Endothelial cell of umbilical vein (primary cell): ENCODE measurements at regions of chr19 and their contacts with region 1.

Region 1: GRCh38 chr19:49148784-49149651 is 6.2 kb downstream of the HRC start:
- DNase-seq: peak; percentile 91
- H3K4me3 ChIP-seq: peak overlapping the region; percentile 31 to 73 (median 61)
- H3K27ac ChIP-seq: no peak overlapping the region
- H3K4me1 ChIP-seq: peaks cover 28% of the 10 kb centered on the region
- H3K27me3 ChIP-seq: peaks cover 2 to 5% of the 10 kb centered on the region in 2 experiments
- CTCF ChIP-seq: no peak
- POLR2A ChIP-seq: no peak

Region 2: DNA sequence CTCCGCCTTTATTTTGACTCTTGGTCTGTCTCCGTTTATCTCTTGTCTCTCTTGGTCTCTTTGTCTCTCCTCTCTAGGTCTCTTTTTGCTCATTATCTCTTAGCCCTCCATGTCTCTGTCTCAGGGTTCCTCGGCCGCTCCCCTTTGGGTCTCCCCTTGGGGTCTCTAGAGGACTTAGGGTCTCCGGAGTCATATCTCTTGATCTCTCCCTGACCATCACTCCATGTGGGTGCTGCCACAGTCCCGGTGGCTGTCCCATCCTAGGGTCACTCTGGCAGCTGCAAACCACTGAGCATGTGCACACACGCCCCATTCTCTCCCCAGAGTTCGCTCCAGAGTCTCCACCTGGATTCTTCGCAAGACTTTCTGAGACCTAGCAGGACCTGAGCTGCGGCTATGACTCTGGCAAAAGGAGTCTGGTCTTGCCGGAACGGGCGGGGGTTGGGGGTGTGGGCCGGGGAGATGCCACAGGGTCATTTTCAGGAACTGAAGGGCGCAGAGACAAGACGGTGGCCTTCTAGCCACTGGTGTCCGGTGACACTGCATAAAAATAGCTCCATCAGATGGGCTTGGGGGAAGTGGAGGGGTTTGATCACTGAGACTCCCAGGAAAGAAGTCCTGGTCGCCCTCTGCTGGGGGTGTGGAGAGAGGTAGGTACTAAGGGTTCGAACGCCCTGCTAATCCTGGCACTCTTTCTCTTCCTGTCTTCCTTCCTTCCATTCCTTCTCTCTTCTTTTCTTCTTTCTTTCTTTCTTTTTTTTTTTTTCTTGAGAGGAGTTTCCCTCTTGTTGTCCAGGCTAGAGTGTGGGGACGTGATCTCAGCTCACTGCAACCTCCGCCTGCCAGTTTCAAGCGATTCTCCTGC is 75.3 kb before region 1 on chr19:
- CTCF ChIA-PET with region 1: interaction called, 8 read pairs
- POLR2A ChIA-PET with region 1: no interaction called
- dilution Hi-C with region 1: no loop called
- intact Hi-C with region 1: loop called (anchors 1 kb)
- DNase-seq: no peak
- H3K4me3 ChIP-seq: no peak overlapping the region
- H3K27ac ChIP-seq: no peak overlapping the region
- H3K4me1 ChIP-seq: no peaks in the 10 kb centered on the region
- H3K27me3 ChIP-seq: peaks cover 22 to 24% of the 10 kb centered on the region in 2 experiments
- CTCF ChIP-seq: peak in 1 of 2 donors; percentile 8
- POLR2A ChIP-seq: no peak

Region 3: GRCh38 chr19:49118565-49119410 is 30.2 kb before region 1 on chr19 and contains the start of gene C19orf73:
- CTCF ChIA-PET with region 1: interaction called, 18 read pairs
- POLR2A ChIA-PET with region 1: interaction called, 4 read pairs
- dilution Hi-C with region 1: no loop called
- intact Hi-C with region 1: loop called (anchors 1 kb)
- DNase-seq: peak; percentile 94
- H3K4me3 ChIP-seq: peak within 1 kb of the TSS; percentile 16 to 65 (median 57)
- H3K27ac ChIP-seq: peak within 1 kb of the TSS; percentile 63
- H3K4me1 ChIP-seq: peaks cover 14% of the 10 kb centered on the region
- H3K27me3 ChIP-seq: peaks cover 4 to 8% of the 10 kb centered on the region in 2 experiments
- CTCF ChIP-seq: peak in 1 of 2 donors; percentile 7
- POLR2A ChIP-seq: peak; percentile 53
- total RNA-seq, gene C19orf73: 1.5 TPM in 1 of 2 replicates, not detected in the other

Region 4: DNA sequence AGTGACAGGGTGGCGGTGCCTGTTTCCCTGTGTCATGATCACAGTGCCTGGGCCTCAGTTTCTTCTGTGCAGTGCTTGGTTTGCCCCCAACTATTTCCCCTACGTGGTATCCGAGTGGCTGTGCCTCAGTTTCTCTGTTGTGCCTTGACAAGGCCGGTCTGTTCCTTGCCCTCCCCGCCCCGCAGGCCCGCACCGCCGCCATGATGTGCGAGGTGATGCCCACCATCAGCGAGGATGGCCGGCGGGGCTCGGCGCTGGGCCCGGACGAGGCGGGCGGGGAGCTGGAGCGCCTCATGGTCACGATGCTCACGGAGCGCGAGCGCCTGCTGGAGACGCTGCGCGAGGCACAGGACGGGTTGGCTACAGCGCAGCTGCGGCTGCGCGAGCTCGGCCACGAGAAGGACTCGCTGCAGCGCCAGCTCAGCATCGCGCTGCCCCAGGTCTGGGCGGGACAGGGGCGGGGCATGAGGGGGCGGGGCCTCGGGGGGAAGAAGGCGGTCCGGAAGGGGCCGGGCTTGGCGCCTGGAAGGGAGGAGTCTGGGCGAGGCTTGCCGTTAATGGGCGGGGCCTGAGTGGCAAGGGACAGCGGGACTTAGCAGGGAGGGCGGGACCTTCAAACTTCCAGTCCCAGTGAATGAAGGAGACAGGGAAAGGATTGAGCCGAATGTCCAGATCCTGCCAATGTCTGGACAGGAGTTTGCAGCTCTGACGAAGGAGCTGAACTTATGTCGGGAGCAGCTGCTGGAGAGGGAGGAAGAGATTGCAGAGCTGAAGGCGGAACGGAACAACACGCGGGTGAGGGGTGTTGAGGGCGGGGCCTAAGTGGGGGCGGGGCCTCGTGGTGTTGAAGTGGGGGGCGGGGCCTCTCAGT is 21.1 kb before region 1 on chr19:
- CTCF ChIA-PET with region 1: interaction called, 15 read pairs
- POLR2A ChIA-PET with region 1: no interaction called
- dilution Hi-C with region 1: no loop called
- intact Hi-C with region 1: no loop called
- DNase-seq: peak; percentile 98
- H3K4me3 ChIP-seq: no peak overlapping the region
- H3K27ac ChIP-seq: no peak overlapping the region
- H3K4me1 ChIP-seq: no peaks in the 10 kb centered on the region
- H3K27me3 ChIP-seq: peaks cover 0 to 4% of the 10 kb centered on the region in 2 experiments
- CTCF ChIP-seq: peak in 1 of 2 donors; percentile 38
- POLR2A ChIP-seq: no peak

Region 5: DNA sequence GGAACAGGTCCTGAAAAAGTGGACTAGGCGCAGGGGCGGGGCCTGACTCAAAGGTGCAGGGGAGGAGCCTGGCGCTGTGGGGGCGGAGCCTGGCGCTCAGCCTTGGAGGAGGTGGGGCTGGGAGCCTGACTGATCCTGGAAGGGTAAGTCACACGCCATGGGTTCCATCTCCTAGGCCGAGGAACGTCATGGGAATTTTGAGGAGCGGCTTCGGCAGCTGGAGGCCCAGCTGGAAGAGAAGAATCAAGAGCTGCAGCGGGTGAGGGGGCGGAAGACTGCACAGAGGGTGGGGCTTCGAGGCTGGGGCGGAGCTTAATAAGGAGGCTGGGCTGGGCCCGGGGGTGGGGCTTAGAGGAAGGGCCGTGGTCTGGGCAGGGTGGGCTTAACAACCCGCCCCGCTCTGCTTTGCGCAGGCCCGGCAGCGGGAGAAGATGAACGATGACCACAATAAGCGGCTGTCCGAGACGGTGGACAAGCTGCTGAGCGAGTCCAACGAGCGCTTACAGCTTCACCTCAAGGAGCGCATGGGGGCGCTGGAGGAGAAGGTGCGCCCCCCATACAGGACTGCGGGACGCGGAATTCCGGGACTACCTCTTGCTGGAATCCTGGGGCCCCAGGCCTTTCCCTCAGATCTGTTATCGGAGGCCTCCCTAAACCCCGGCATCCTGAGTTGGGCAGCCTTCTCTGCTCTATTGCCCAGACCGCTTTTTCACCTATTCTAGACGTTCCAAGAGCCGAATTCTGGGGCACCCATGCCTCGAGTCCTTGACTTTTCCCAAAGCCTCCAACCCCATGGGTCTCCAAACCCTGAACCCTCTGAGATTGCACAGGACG is 15.2 kb before region 1 on chr19:
- CTCF ChIA-PET with region 1: interaction called, 10 read pairs
- POLR2A ChIA-PET with region 1: no interaction called
- dilution Hi-C with region 1: no loop called
- intact Hi-C with region 1: no loop called
- DNase-seq: peak; percentile 54
- H3K4me3 ChIP-seq: peak overlapping the region in 1 of 3 experiments; percentile 30
- H3K27ac ChIP-seq: no peak overlapping the region
- H3K4me1 ChIP-seq: no peaks in the 10 kb centered on the region
- H3K27me3 ChIP-seq: peaks cover 0 to 7% of the 10 kb centered on the region in 2 experiments
- CTCF ChIP-seq: peak in 1 of 2 donors; percentile 6
- POLR2A ChIP-seq: no peak

Region 6: DNA sequence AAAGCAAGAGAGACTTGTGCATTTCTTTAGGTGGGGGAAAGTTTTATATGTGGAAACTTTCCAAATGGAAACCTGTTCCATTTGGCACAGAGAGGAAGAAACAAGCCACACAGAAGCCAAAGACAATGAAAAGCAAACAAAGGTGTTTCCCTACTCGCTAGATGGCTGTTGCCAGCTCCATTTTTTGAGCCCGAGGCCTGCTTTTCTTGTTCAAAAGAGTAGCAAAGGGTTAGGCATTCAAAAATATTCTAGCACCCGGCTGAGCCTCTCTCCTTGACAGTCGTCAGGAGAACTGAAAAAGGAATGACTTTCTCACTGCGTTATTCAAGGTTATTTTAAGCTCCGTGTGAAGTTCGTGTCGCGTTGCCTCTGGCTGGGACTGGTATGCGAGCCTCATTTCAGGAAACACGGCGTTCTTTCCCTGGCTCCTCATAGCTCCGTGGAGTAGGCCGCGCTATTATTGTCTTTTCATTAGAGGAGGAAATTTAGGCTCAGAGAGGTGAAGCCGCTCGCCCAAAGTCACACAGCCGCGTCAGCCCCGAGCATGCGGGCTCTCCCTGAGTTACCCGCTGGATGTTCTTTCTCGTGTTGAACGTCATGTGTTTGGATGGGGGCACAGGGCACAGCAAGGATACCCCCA is 16.2 kb after region 1 on chr19:
- CTCF ChIA-PET with region 1: interaction called, 13 read pairs
- POLR2A ChIA-PET with region 1: no interaction called
- dilution Hi-C with region 1: no loop called
- intact Hi-C with region 1: no loop called
- DNase-seq: peak; percentile 85
- H3K4me3 ChIP-seq: no peak overlapping the region
- H3K27ac ChIP-seq: peak overlapping the region; percentile 47
- H3K4me1 ChIP-seq: peaks cover 12% of the 10 kb centered on the region
- H3K27me3 ChIP-seq: no peaks in the 10 kb centered on the region
- CTCF ChIP-seq: no peak
- POLR2A ChIP-seq: no peak

Region 7: DNA sequence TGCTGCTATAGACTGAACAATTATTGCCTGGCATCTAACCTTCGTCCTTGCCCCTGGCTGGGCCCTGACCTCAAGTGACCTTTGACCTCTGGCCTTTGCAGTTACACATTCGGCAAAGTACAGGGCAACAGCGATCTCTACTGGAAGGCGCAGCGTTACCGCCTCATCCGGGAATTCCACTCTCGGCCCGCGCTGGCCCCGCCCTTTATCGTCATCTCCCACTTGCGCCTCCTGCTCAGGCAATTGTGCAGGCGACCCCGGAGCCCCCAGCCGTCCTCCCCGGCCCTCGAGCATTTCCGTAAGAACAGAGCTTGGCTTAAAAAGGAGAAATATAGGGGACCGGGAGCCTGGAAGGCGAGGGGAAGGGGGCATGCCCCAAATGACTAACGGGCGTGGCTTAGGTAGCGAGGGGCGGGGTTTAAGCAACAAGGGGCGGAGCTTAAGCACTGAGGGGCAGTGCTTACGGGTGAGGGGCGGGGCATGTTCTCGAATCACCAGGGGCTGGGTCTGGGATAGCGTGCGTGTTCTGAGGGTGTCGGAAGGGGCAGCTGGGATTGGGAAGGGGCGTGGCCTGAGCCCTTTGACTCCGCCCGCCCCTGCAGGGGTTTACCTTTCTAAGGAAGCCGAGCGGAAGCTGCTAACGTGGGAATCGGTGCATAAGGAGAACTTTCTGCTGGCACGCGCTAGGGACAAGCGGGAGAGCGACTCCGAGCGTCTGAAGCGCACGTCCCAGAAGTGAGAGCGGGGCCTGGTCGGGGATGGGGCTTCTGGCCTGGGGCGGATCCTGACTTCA is 61.3 kb after region 1 on chr19:
- CTCF ChIA-PET with region 1: interaction called, 10 read pairs
- POLR2A ChIA-PET with region 1: no interaction called
- dilution Hi-C with region 1: no loop called
- intact Hi-C with region 1: loop called (anchors 2 kb)
- DNase-seq: peak; percentile 9
- H3K4me3 ChIP-seq: no peak overlapping the region
- H3K27ac ChIP-seq: no peak overlapping the region
- H3K4me1 ChIP-seq: no peaks in the 10 kb centered on the region
- H3K27me3 ChIP-seq: no peaks in the 10 kb centered on the region
- CTCF ChIP-seq: no peak
- POLR2A ChIP-seq: no peak

Region 8: DNA sequence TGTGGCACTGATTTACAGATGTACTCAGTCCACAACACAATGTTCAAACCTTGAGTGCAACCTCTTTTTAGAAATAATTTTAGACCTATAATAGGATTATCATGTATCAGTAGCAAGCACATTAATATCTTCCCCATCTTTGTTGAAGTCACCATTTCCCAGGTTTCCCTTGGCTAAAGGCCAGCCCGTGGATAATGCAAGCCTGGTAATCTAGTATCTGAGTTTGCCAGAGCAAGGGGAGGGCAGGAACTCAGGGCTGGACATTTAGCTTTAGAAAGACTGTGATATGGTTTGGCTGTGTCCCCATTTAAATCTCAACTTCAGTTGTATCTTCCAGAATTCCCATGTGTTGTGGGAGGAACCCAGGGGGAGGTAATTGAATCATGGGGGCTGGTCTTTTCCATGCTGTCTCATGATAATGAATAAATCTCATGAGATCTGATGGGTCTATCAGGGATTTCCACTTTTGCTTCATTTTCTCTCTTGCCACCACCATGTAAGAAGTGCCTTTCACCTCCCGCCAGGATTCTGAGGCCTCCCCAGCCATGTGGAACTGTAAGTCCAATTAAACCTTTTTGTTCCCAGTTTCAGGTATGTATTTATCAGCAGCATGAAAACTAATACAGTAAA is 138.2 kb after region 1 on chr19:
- CTCF ChIA-PET with region 1: no interaction called
- POLR2A ChIA-PET with region 1: no interaction called
- dilution Hi-C with region 1: no loop called
- intact Hi-C with region 1: no loop called
- DNase-seq: no peak
- H3K4me3 ChIP-seq: no peak overlapping the region
- H3K27ac ChIP-seq: no peak overlapping the region
- H3K4me1 ChIP-seq: no peaks in the 10 kb centered on the region
- H3K27me3 ChIP-seq: peaks cover 0 to 3% of the 10 kb centered on the region in 2 experiments
- CTCF ChIP-seq: no peak
- POLR2A ChIP-seq: no peak